ENCODE measurements at regions of chr7 and their contacts with region 1.

Region 1: DNA sequence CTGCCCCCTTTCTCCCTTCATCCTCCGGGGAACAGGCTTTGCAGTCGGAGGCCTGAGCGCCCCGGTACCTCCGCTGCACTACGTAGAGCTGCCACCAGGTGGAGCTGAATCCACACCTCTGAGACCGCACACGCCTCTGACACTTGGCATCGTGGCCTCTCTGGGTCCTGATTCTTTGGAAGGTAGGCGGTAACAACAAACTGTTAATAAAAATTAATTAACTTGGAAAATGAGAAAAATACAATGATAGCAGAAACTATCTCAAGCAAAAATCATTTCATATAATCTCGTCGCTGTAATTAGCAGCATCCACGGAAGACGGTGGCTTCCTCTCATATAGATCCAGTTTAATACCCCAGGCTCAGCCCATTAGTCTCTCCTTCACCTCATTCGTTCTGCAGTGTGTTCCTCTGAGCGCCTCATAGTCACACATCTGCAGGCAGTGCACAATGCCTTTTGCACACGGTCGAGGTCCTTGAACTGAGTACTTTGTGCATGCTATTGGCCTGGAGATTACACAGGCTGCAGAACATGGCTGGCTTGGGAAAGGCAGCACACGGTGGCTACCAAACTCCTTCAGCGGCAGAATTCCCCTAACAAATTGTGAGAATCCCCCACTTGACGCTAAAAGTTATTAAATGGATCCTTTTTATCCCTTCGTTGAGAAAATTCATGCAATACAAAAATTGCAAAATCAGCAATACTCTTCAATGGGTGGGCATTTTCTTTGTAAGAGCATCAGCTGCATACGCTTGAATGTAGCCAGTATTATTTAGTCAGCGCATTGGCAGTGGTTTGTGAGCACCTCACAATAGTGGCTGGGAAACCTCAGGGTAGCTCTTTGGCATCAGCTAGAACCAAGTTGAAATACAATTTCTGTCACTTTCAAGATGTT is 18.7 kb downstream of the OR9A2 start:
- DNase-seq: peak; percentile 78 to 88 (median 84)
- H3K4me3 ChIP-seq: no peak overlapping the region
- H3K27ac ChIP-seq: no peak overlapping the region
- H3K4me1 ChIP-seq: peaks cover 0 to 3% (median 0%) of the 10 kb centered on the region in 3 donors
- H3K27me3 ChIP-seq: no peaks in the 10 kb centered on the region
- CTCF ChIP-seq: peak; percentile 99

Region 2: GRCh38 chr7:142357953-142358520 is 650.2 kb before region 1 on chr7:
- intact Hi-C with region 1: no loop called
- DNase-seq: peak in 4 of 5 donors; percentile 45 to 78 (median 65)
- H3K4me3 ChIP-seq: no peak overlapping the region
- H3K27ac ChIP-seq: no peak overlapping the region
- H3K4me1 ChIP-seq: no peaks in the 10 kb centered on the region
- H3K27me3 ChIP-seq: no peaks in the 10 kb centered on the region
- CTCF ChIP-seq: peak; percentile 65

Region 3: GRCh38 chr7:142785841-142786250 is 222.4 kb before region 1 on chr7:
- intact Hi-C with region 1: no loop called
- DNase-seq: no peak
- H3K4me3 ChIP-seq: no peak overlapping the region
- H3K27ac ChIP-seq: no peak overlapping the region
- H3K4me1 ChIP-seq: no peaks in the 10 kb centered on the region
- H3K27me3 ChIP-seq: no peaks in the 10 kb centered on the region
- CTCF ChIP-seq: no peak

Region 4: GRCh38 chr7:142853739-142854371 is 154.4 kb before region 1 on chr7:
- intact Hi-C with region 1: loop called (anchors 10 kb)
- DNase-seq: peak; percentile 79 to 90 (median 88)
- H3K4me3 ChIP-seq: peak overlapping the region; percentile 83 to 89 (median 84)
- H3K27ac ChIP-seq: no peak overlapping the region
- H3K4me1 ChIP-seq: peaks cover 0 to 6% (median 0%) of the 10 kb centered on the region in 3 donors
- H3K27me3 ChIP-seq: no peaks in the 10 kb centered on the region
- CTCF ChIP-seq: peak; percentile 66

Region 5: DNA sequence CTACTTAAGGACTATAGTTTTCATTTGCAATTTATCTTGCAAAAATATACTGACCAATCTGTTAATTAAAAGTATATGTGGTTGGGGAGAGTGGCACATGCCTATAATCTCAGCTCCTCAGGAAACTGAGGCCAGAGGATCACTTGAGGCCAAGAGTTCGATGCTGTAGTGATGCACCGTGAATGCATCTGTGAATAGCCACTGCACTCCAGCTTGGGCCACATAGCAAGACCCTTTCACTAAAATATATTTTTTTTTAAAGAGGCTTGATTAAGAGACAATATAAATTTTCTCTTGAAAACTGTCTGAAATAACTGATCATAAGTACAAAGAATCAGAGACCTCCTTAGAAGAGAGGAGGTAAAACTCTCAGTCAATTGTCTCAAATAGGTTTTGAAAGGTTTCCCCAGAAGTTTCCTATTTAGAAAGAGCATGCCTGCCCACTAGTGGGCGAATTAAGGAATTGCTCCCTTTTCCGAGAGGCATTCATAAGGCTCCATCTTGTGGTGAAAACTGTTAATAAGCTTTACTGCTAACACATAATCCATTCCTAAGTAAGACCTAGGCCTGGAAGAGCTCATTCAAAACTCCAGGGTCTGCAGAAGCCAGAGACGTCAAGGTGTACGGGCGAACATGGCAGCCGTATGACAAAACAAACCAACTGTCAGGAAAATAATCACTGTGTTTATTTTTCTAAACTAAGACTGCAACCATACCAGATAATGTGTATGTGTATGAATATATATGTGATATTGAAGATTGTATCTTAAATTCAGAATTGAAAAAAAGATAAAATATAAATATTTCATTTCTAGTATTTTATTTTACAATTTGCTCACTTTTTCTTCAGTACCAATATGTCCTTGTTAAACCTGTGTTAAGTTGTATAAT is 206.8 kb after region 1 on chr7:
- intact Hi-C with region 1: loop called (anchors 5 kb)
- DNase-seq: peak in 4 of 5 donors; percentile 66 to 93 (median 81)
- H3K4me3 ChIP-seq: no peak overlapping the region
- H3K27ac ChIP-seq: no peak overlapping the region
- H3K4me1 ChIP-seq: no peaks in the 10 kb centered on the region
- H3K27me3 ChIP-seq: no peaks in the 10 kb centered on the region
- CTCF ChIP-seq: peak; percentile 100

Measured in kidney (tissue), 22 donors.